ENCODE measurements at regions of chr10 and their contacts with region 1.

Region 1: GRCh38 chr10:76962851-76963250 is 674.8 kb downstream of the KCNMA1 start:
- DNase-seq: no peak
- H3K4me3 ChIP-seq: no peak overlapping the region
- H3K27ac ChIP-seq: no peak overlapping the region
- H3K4me1 ChIP-seq: no peaks in the 10 kb centered on the region
- H3K27me3 ChIP-seq: no peaks in the 10 kb centered on the region
- CTCF ChIP-seq: no peak
- EP300 ChIP-seq: no peak
- POLR2A ChIP-seq: no peak

Region 2: DNA sequence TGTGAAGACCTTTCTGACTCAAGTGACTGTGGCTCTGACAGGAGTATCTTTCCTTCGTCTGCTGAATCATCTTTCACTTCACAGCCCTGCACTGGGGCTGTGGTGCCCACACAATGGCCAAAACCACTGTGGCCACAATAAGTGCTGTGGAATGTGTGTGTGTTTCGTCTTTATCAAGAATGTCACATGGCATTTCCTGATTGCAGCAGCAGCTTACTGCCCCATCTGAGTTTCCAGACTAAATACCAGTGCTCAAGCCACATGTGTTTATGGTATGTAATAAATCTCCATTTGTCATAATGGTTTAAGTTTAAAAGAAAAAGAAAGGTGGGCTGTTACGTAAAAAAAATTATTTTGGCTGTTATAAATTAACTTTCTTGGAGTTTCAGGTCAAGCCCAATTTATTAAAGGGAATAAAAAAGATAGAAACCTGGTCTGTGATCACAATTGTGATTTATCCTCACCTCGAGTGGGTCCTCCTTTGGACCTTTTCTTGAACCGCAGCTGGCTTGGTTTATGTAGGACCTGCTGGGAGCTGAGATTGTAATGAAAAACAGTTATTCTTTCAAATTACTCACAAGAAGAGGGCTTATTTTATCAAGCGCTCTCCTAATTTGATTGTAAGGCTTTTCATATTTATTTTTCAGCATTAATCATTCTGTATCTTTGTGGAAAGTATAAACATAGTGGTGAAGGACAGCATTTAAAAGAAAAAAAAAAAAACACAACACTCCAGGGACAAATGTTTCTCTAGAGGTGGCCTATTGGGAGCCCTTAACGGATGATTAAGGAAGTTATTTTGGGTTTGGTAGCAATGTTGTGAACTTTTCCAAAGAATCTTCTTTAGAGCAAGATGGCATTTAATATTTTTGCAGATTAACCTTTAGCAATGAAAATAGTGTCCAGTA is 1415.2 kb before region 1 on chr10:
- intact Hi-C with region 1: no loop called
- DNase-seq: no peak
- H3K4me3 ChIP-seq: no peak overlapping the region
- H3K27ac ChIP-seq: peak overlapping the region in 1 of 2 donors; percentile 1
- H3K4me1 ChIP-seq: peaks cover 12% of the 10 kb centered on the region
- H3K27me3 ChIP-seq: no peaks in the 10 kb centered on the region
- CTCF ChIP-seq: no peak
- EP300 ChIP-seq: no peak
- POLR2A ChIP-seq: no peak

Region 3: DNA sequence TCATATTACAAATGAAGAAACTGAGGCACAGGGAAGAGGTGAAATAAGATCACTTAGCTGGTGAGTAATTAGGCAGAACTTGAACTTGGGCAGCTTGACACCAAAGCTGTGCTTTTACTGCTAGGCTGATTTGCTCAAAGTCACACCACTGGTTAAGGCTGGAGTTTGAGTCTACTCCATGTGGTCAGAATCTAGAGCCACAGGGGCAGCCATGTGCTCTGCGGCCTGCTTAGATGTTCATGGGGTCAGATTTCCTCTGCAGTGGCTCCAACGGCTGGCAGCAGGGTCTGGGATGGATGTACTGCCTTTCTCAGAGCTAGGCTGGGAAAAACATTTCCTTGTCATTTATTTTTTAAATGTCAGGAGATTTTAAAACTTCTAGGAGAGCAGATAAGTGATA is 257.3 kb after region 1 on chr10:
- intact Hi-C with region 1: no loop called
- DNase-seq: no peak
- H3K4me3 ChIP-seq: no peak overlapping the region
- H3K27ac ChIP-seq: no peak overlapping the region
- H3K4me1 ChIP-seq: no peaks in the 10 kb centered on the region
- H3K27me3 ChIP-seq: no peaks in the 10 kb centered on the region
- CTCF ChIP-seq: no peak
- EP300 ChIP-seq: no peak
- POLR2A ChIP-seq: no peak

Region 4: GRCh38 chr10:77959384-77959783 is 996.5 kb after region 1 on chr10:
- intact Hi-C with region 1: loop called in 1 of 4 experiments (anchors 5 kb)
- DNase-seq: peak in 3 of 5 donors; percentile 30 to 62 (median 50)
- H3K4me3 ChIP-seq: no peak overlapping the region
- H3K27ac ChIP-seq: no peak overlapping the region
- H3K4me1 ChIP-seq: peaks cover 7% of the 10 kb centered on the region
- H3K27me3 ChIP-seq: no peaks in the 10 kb centered on the region
- CTCF ChIP-seq: no peak
- EP300 ChIP-seq: no peak
- POLR2A ChIP-seq: no peak

Measured in ovary (tissue), 10 donors.